PC-9 (cell line): ENCODE measurements at regions of chr2 and their contacts with region 1.

Region 1: GRCh38 chr2:23954325-23955014 is 14.2 kb downstream of the UBXN2A start:
- DNase-seq: no peak
- H3K4me3 ChIP-seq: no peak overlapping the region
- H3K27ac ChIP-seq: no peak overlapping the region
- H3K4me1 ChIP-seq: no peaks in the 10 kb centered on the region
- H3K27me3 ChIP-seq: no peaks in the 10 kb centered on the region
- CTCF ChIP-seq: no peak

Region 2: GRCh38 chr2:23900927-23901322 is 53.5 kb before region 1 on chr2:
- CTCF ChIA-PET with region 1: interaction called, 13 read pairs
- POLR2A ChIA-PET with region 1: no interaction called
- intact Hi-C with region 1: no loop called
- DNase-seq: peak in 1 of 2 experiments; percentile 89
- H3K4me3 ChIP-seq: peak overlapping the region; percentile 46; the same call in 1 of the 2 replicates
- H3K27ac ChIP-seq: peak overlapping the region; percentile 93
- H3K4me1 ChIP-seq: peaks cover 60% of the 10 kb centered on the region
- H3K27me3 ChIP-seq: no peaks in the 10 kb centered on the region
- CTCF ChIP-seq: no peak

Region 3: DNA sequence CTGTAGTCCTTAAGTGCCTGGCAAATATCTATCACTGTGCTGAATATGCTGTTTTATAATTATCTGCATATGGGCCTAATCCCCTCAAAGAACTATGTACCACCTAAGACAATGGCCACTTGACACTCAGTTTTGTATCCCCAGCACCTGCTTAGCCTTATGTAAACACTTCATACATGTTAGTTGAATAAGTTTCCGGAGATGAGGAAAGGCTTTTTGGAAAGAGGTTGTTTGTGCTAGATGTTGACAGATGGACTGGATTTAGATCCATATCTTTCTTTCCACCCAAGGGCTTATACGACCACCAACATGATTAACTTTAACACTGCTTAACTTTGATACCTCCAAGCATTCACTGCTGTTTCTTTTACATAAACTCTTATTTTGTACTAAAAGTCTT is 283.7 kb after region 1 on chr2:
- CTCF ChIA-PET with region 1: no interaction called
- POLR2A ChIA-PET with region 1: no interaction called
- intact Hi-C with region 1: no loop called
- DNase-seq: no peak
- H3K4me3 ChIP-seq: no peak overlapping the region
- H3K27ac ChIP-seq: no peak overlapping the region
- H3K4me1 ChIP-seq: no peaks in the 10 kb centered on the region
- H3K27me3 ChIP-seq: no peaks in the 10 kb centered on the region
- CTCF ChIP-seq: no peak

Region 4: DNA sequence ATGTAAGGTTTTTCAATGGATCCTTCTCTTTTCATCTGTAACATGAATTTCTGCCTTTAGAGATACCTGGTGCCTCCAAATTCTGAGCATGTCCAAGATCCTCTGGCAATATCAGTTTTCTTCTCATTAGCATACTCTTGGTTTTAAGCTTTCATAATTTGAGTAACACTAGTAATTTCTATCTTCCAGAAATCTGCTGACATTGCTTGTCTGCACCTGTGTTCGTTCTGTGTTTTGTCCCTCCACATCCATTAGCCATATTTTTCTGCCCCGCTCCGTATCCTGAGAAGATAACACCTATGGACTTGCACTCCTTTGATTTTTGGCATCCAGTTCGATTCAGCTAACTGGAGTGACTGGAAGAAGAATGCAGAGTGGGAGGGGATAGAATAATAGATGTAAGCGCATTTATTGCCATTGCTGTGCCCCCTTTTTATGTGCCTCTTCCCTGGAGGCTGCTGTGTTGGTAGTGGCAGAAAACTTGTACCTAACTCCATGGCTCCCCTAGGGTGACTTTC is 438.1 kb after region 1 on chr2:
- CTCF ChIA-PET with region 1: interaction called, 11 read pairs
- POLR2A ChIA-PET with region 1: no interaction called
- intact Hi-C with region 1: no loop called
- DNase-seq: no peak
- H3K4me3 ChIP-seq: no peak overlapping the region
- H3K27ac ChIP-seq: no peak overlapping the region
- H3K4me1 ChIP-seq: no peaks in the 10 kb centered on the region
- H3K27me3 ChIP-seq: no peaks in the 10 kb centered on the region
- CTCF ChIP-seq: no peak